Activated CD4-positive, alpha-beta T cell treated with anti-CD3 and anti-CD28 coated beads, Interleukin-2, amount 10 ng/mL, durations not matched to agents 24 days and 14 days (primary cell): ENCODE measurements at regions of chr1 and their contacts with region 1.

Region 1: DNA sequence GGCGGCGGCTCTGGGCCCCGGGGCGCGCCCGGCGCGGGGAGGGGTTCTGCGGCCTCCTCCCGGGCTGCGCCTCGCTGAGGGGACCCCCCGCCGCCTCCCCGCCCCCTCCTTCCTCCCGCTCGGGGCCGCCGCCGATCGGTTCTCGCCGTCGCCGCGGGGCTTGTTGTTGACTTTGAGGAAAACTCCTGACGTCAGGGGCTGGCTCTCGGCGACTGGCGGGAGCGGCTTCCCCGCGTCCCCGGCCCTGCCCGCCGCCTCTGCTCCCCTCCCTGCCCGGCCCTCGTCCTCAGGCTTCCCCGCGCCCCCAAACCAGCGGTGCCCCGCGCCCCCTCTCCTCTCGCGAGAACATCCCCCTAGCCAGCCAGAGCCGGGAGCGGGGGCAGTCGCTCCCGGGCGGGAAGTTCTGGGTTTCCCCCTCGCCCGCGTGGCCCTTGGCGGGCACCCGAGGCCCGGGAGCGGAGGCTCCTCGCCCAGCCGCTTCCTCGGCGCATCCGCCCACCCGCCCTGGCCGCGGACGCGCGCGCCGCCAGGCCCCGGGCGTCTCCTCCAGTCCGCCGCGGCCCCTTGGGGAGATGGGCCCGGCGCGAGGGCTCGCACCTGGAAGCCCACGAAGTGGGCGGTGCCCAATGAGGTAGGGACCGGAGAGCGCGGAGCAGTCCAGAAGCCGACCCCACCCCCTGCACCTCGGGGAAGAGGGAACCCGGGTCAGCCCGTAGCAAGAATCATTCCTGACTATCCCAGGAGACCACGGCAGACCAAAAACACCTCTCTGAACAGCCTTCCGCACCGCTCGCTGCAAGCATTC is 611 bp upstream of the AKT3 start:
- DNase-seq: peak; percentile 93
- H3K4me3 Mint-ChIP-seq: peak overlapping the region; percentile 85
- H3K27ac Mint-ChIP-seq: peak overlapping the region; percentile 90
- H3K4me1 Mint-ChIP-seq: peaks cover 19% of the 10 kb centered on the region
- H3K27me3 Mint-ChIP-seq: peaks cover 44% of the 10 kb centered on the region

Region 2: DNA sequence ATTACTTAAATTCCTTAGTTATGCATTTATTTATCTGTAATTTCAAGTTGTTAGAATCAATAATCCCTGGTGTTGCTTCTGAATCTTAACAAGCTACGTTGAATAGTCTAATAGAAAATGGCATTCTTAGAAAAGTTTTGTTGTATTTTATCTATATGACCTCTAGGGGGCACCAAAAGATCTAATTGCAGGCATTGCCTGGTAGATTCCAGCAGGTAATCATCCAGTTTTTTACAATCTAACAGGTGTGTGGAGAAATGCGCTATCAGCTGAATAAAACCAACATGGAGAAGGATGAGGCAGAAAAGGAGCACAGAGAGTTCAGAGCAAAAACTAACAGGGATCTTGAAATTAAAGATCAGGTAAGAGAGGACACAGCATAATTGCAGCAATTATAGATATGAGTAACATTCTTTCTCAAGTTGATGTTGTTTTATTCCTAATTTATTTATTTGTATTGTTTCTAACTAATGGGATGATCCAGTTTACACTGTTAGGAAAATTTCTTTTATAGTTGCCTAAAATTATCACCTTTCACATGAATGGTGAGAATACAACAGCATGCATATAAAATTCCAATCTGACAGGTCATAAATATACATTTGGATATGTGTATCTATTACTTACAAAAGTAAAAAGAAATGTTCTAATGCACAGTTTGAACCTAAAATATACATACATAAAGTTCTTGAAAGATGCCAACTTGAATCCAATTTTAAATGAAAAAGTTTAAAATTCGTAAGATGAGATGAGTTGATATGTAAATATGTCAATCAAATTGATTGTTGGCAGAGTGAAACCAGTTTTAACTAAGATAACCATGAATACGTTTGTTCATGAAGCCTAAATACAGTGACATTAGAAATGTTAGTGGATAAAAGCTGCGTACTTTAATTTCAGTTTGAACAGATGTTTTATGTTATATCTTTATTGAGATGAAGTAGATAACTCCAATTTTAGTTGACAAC is 506.4 kb before region 1 on chr1:
- intact Hi-C with region 1: loop called (anchors 5 kb)
- DNase-seq: peak; percentile 66
- H3K4me3 Mint-ChIP-seq: no peak overlapping the region
- H3K27ac Mint-ChIP-seq: no peak overlapping the region
- H3K4me1 Mint-ChIP-seq: peaks cover 2% of the 10 kb centered on the region
- H3K27me3 Mint-ChIP-seq: no peaks in the 10 kb centered on the region

Region 3: DNA sequence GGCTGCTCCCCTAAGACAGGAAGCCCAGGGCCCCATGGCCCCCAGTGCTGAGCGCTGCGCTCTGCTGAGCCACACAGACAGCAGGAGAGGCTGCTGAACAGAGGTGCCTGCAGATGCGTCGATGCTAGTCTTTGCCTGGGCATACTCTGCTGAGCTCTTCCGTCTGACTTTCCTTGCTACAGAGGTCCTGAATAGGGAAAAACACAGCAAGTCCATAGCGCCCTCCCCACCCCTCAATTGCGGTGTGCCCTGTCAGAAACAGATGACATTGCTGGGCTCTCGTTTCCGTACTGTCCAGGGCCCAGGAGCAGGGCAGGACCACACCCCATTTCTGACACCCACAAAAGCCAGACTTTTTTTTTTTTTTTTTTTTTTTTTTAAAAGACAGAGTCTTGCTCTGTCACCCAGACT is 342.3 kb before region 1 on chr1:
- intact Hi-C with region 1: no loop called
- DNase-seq: no peak
- H3K4me3 Mint-ChIP-seq: no peak overlapping the region
- H3K27ac Mint-ChIP-seq: peak overlapping the region; percentile 31
- H3K4me1 Mint-ChIP-seq: peaks cover 9% of the 10 kb centered on the region
- H3K27me3 Mint-ChIP-seq: no peaks in the 10 kb centered on the region

Region 4: GRCh38 chr1:243831463-243831862 is 19.2 kb before region 1 on chr1:
- intact Hi-C with region 1: loop called (anchors 2 kb)
- DNase-seq: no peak
- H3K4me3 Mint-ChIP-seq: no peak overlapping the region
- H3K27ac Mint-ChIP-seq: no peak overlapping the region
- H3K4me1 Mint-ChIP-seq: peaks cover 18% of the 10 kb centered on the region
- H3K27me3 Mint-ChIP-seq: no peaks in the 10 kb centered on the region

Region 5: GRCh38 chr1:243939167-243939848 is 88.7 kb after region 1 on chr1:
- intact Hi-C with region 1: loop called (anchors 5 kb)
- DNase-seq: no peak
- H3K4me3 Mint-ChIP-seq: no peak overlapping the region
- H3K27ac Mint-ChIP-seq: no peak overlapping the region
- H3K4me1 Mint-ChIP-seq: peaks cover 12% of the 10 kb centered on the region
- H3K27me3 Mint-ChIP-seq: peaks cover 5% of the 10 kb centered on the region

Region 6: DNA sequence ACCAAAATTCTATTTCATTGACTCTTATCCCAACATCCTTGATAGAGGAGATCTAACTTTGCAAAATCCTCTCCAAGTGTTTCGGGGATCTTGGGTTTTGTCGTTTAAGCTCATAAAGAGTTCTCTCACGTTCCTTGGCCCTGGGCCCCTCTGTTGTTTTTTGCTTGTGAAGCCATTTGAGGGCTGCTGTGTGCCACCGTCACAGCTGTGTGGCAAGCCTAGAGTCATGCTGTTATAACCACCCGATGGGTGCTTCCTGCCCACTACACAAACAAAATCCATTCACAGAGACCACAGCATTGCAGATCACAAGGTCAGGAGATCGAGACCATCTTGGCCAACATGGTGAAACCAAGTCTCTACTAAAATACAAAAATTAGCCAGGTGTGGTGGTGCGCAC is 447.0 kb after region 1 on chr1:
- intact Hi-C with region 1: loop called (anchors 2 kb)
- DNase-seq: no peak
- H3K4me3 Mint-ChIP-seq: no peak overlapping the region
- H3K27ac Mint-ChIP-seq: no peak overlapping the region
- H3K4me1 Mint-ChIP-seq: peaks cover 12% of the 10 kb centered on the region
- H3K27me3 Mint-ChIP-seq: no peaks in the 10 kb centered on the region

Region 7: GRCh38 chr1:244435562-244436205 is 585.0 kb after region 1 on chr1:
- intact Hi-C with region 1: loop called (anchors 5 kb)
- DNase-seq: peak; percentile 59
- H3K4me3 Mint-ChIP-seq: peak overlapping the region; percentile 63
- H3K27ac Mint-ChIP-seq: peak overlapping the region; percentile 99
- H3K4me1 Mint-ChIP-seq: peaks cover 36% of the 10 kb centered on the region
- H3K27me3 Mint-ChIP-seq: no peaks in the 10 kb centered on the region

Region 8: DNA sequence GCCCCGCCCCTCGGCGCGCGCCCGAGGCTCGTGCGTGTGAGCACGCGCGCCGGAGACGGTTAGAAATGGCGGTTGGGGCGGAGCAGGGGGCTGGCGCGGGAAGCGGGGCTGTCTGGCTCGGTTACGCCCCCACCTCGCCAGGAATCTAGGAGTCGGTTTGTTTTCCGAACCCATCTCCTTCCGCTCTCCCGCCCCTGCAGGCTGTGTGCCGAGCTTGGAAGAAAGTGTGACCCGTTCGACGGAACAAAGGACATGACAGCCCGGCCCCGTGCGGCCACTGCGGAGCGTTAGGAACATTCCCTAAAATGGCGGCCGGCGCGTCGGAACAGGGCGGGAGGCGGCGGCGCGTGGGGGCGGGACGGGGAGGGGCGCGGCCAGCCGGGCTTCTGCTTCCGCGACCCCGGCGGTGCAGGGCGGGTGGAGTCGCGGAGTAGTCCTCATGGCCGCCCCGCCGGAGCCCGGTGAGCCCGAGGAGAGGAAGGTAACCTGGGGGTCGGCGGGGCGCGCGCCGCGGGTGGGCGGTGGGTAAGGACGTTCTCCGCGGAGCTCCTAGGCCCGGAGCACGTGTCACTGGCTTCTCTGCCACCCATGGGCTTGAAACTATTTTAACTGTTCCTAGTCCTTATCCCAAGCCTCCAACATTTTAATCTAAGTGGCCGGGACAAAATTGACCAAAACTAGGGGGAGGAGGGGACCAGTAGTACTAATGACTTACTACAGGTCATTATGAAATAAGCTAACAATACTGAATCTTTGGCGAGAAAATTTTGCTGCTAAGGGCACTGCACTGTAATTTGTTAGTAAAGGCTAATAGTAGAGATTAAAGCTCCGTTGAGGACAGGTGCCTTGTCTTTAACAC is 984.9 kb after region 1 on chr1 and contains the start of gene COX20:
- intact Hi-C with region 1: loop called (anchors 10 kb)
- DNase-seq: peak; percentile 97
- H3K4me3 Mint-ChIP-seq: peak within 1 kb of the TSS; percentile 91
- H3K27ac Mint-ChIP-seq: peak within 1 kb of the TSS; percentile 99
- H3K4me1 Mint-ChIP-seq: peaks cover 43% of the 10 kb centered on the region
- H3K27me3 Mint-ChIP-seq: no peaks in the 10 kb centered on the region
- total RNA-seq, gene COX20: 28.6 and 30.0 TPM in 2 replicates